ENCODE measurements at regions of chr16 and their contacts with region 1.

Region 1: DNA sequence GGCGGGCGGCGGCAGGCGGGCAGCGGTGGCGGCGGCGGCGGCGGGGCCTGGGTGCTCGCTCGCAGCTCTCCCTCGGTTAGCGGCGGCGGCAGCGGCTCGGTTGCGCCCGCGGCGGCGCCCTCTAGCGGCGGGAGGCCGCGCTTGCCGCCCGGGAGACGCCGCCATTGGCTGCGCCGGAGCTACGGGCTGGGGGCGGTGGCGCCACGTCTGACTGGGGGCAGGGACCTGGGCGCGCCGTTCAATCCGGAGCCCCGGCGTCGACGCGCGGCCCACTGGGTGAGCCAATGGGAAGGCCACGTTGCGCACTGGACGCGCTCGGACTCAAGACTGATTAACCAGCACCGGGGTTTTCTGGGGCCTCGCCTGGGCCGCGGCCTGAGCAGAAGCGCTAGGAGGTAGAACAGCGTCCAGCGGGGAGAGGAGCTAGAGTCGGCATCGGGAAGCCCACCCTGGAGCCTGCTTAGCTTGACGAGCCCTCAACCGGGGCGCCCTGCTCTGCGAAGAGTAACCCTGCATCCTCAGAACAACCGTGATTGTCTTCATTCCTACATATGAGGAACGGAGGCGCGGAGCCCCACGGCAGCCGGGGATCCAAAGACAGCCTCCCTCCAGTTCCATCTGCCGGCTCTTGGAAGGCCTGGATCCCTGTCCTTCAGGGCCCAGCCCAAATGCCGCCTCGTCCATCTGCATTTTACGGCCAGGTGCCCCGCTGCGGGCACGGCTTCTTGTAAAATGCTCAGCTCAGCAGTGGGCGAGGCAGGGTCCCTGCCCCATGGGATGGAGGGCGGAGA is at the start of gene ZC3H7A:
- DNase-seq: peak; percentile 94
- H3K4me3 Mint-ChIP-seq: peak within 1 kb of the TSS; percentile 92
- H3K27ac Mint-ChIP-seq: peak within 1 kb of the TSS; percentile 98
- H3K4me1 Mint-ChIP-seq: peaks cover 64% of the 10 kb centered on the region
- H3K27me3 Mint-ChIP-seq: no peaks in the 10 kb centered on the region
- total RNA-seq, gene ZC3H7A: 68.0 to 76.9 TPM

Region 2: DNA sequence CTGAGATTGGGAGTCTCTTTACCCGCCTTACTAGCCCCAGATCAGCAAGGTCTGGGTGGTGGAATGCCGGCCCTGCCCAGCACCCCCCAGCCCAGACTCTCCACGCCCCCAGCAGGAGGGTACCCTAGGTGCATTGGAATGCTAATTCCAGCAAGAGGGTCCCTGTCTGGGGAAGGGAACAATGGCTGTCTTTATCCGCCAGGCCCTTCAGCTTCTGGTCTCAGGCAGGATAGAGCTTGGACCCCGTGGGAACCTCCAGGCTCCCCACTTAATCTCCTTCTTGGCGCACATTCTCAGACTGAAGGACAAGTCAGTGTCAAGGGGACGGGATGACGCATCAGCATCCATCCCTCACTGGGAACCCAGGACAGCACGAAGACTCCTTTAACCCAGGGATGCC is 295.7 kb before region 1 on chr16:
- CTCF ChIA-PET with region 1: no interaction called
- POLR2A ChIA-PET with region 1: no interaction called
- DNase-seq: no peak
- H3K4me3 Mint-ChIP-seq: no peak overlapping the region
- H3K27ac Mint-ChIP-seq: no peak overlapping the region
- H3K4me1 Mint-ChIP-seq: peaks cover 18% of the 10 kb centered on the region
- H3K27me3 Mint-ChIP-seq: no peaks in the 10 kb centered on the region

Region 3: GRCh38 chr16:11734025-11734652 is 63.2 kb before region 1 on chr16:
- CTCF ChIA-PET with region 1: interaction called, 14 read pairs
- POLR2A ChIA-PET with region 1: interaction called, 4 read pairs
- DNase-seq: no peak
- H3K4me3 Mint-ChIP-seq: no peak overlapping the region
- H3K27ac Mint-ChIP-seq: no peak overlapping the region
- H3K4me1 Mint-ChIP-seq: peaks cover 77% of the 10 kb centered on the region
- H3K27me3 Mint-ChIP-seq: no peaks in the 10 kb centered on the region

Region 4: GRCh38 chr16:11742539-11743307 is 54.6 kb before region 1 on chr16 and contains the start of gene TXNDC11:
- CTCF ChIA-PET with region 1: interaction called, 10 read pairs
- POLR2A ChIA-PET with region 1: interaction called, 6 read pairs
- DNase-seq: peak; percentile 99
- H3K4me3 Mint-ChIP-seq: peak within 1 kb of the TSS; percentile 95
- H3K27ac Mint-ChIP-seq: peak within 1 kb of the TSS; percentile 97
- H3K4me1 Mint-ChIP-seq: peaks cover 51% of the 10 kb centered on the region
- H3K27me3 Mint-ChIP-seq: no peaks in the 10 kb centered on the region
- total RNA-seq, gene TXNDC11: 38.5 to 42.7 TPM

Region 5: GRCh38 chr16:11783319-11784037 is 13.9 kb before region 1 on chr16:
- CTCF ChIA-PET with region 1: interaction called, 62 read pairs
- POLR2A ChIA-PET with region 1: interaction called, 3 read pairs
- DNase-seq: peak; percentile 66
- H3K4me3 Mint-ChIP-seq: peak overlapping the region; percentile 74
- H3K27ac Mint-ChIP-seq: peak overlapping the region; percentile 99
- H3K4me1 Mint-ChIP-seq: peaks cover 61% of the 10 kb centered on the region
- H3K27me3 Mint-ChIP-seq: no peaks in the 10 kb centered on the region

Region 6: DNA sequence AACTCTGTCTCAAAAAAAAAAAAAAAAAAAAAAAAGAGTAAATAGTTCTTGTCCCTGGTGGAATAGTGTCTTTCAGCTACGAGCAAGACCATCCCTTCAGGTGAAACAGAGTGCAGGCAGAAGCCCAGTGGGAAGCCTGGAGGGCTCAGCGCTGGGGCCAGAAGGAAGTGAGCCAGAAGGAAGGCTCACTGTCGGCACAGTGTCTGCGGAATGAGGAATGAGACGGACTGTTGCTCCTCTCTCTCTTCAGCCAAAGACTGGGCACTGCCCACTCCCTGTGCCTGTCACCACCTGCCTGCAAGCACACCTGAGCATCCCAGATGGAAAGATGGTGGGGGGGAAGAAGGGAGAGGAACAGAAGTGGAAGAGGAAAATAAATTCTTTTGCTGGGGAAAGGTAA is 46.5 kb after region 1 on chr16:
- CTCF ChIA-PET with region 1: interaction called, 14 read pairs
- POLR2A ChIA-PET with region 1: no interaction called
- DNase-seq: no peak
- H3K4me3 Mint-ChIP-seq: no peak overlapping the region
- H3K27ac Mint-ChIP-seq: no peak overlapping the region
- H3K4me1 Mint-ChIP-seq: peaks cover 10% of the 10 kb centered on the region
- H3K27me3 Mint-ChIP-seq: no peaks in the 10 kb centered on the region